Dendritic cell treated with granulocyte-macrophage colony-stimulating factor and Interleukin-4, amounts not matched to agents 40 ng/mL and 50 ng/mL, for 4 days (primary cell): ENCODE measurements at regions of chr9 and their contacts with region 1.

Region 1: GRCh38 chr9:128688512-128689292 is at the start of gene SET:
- H3K4me3 Mint-ChIP-seq: peak within 1 kb of the TSS; percentile 90
- H3K27ac Mint-ChIP-seq: peak within 1 kb of the TSS; percentile 86
- H3K4me1 Mint-ChIP-seq: peaks cover 53% of the 10 kb centered on the region
- H3K27me3 Mint-ChIP-seq: no peaks in the 10 kb centered on the region

Region 2: DNA sequence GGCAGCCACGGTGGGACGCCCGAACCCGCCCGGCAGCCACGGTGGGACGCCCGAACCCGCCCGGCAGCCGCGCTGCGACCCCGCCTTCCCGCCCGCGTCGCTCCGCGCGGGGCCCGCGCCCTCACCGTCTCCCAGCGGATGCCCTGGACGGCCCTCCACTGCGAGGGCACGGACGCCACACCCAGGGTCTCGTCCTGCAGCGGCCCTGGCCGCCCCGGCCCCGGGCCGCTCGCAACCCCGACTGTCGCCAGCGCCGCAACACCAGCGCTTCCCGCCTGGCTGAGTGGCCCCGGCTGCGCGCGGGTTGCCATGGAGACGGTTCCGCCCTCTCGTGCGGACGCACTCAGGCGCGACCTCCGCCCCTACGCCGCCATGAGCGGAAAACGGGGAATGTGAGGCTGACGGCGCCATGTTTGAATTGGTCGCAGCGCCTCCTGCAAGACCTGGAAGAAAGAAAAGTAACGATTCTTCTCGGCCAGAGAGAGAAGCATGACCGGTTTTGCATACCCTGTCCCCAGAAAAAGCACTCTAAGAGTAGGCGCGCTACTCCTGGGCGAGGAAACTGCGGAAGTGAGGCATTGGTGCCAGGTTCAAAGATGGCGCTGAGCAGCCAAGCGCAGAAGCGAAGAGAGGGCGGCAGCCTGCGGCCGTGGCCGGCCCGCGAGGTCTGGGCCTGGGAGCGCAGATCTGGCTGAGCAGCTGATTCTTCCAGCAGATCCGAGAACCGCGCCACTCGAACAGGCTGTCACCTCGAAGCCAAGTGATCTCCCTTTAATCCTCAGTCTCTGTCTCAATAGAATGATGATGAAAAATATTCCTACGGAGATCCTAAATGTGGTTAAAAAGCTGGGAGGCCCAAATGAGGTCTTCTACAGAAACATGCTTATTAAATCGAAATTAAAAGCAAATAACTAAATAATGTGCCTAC is 32.0 kb before region 1 on chr9 and contains the start of gene DYNC2I2:
- intact Hi-C with region 1: loop called (anchors 2 kb)
- H3K4me3 Mint-ChIP-seq: peak within 1 kb of the TSS; percentile 90
- H3K27ac Mint-ChIP-seq: peak within 1 kb of the TSS; percentile 99
- H3K4me1 Mint-ChIP-seq: peaks cover 5% of the 10 kb centered on the region
- H3K27me3 Mint-ChIP-seq: no peaks in the 10 kb centered on the region

Region 3: GRCh38 chr9:128702445-128702948 is 13.8 kb after region 1 on chr9 and contains the start of gene PKN3:
- intact Hi-C with region 1: loop called (anchors 1 kb)
- H3K4me3 Mint-ChIP-seq: peak within 1 kb of the TSS; percentile 76
- H3K27ac Mint-ChIP-seq: peak within 1 kb of the TSS; percentile 39
- H3K4me1 Mint-ChIP-seq: peaks cover 11% of the 10 kb centered on the region
- H3K27me3 Mint-ChIP-seq: peaks cover 21% of the 10 kb centered on the region